ENCODE measurements at regions of chr16 and their contacts with region 1.

Region 1: DNA sequence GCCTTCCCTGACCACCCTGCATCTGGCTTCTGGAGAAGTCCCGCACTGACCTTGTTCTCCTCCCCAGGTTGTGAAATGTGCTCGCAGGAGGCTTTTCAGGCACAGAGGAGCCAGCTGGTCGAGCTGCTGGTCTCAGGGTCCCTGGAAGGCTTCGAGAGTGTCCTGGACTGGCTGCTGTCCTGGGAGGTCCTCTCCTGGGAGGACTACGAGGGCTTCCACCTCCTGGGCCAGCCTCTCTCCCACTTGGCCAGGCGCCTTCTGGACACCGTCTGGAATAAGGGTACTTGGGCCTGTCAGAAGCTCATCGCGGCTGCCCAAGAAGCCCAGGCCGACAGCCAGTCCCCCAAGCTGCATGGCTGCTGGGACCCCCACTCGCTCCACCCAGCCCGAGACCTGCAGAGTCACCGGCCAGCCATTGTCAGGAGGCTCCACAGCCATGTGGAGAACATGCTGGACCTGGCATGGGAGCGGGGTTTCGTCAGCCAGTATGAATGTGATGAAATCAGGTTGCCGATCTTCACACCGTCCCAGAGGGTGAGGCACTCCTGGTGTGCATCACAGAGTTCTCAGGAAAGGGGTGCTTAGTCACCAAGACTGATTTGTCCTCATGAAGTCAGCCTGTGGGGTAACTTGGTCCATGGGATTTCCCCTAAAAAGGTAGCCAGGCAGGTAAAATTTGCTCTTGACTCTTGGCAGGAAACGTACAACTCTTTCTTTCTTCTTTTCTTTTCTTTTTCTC is 6.2 kb downstream of the NOD2 start:
- DNase-seq: peak in 2 of 9 experiments; percentile 66 to 70
- ATAC-seq: no peak
- H3K4me3 ChIP-seq: no peak overlapping the region
- H3K4me3 Mint-ChIP-seq: no peak overlapping the region
- H3K27ac ChIP-seq: no peak overlapping the region
- H3K27ac Mint-ChIP-seq: no peak overlapping the region
- H3K4me1 ChIP-seq: peaks cover 29% of the 10 kb centered on the region
- H3K4me1 Mint-ChIP-seq: peaks cover 33% of the 10 kb centered on the region
- H3K27me3 ChIP-seq: no peaks in the 10 kb centered on the region
- H3K27me3 Mint-ChIP-seq: peaks cover 2% of the 10 kb centered on the region
- CTCF ChIP-seq: no peak

Region 2: DNA sequence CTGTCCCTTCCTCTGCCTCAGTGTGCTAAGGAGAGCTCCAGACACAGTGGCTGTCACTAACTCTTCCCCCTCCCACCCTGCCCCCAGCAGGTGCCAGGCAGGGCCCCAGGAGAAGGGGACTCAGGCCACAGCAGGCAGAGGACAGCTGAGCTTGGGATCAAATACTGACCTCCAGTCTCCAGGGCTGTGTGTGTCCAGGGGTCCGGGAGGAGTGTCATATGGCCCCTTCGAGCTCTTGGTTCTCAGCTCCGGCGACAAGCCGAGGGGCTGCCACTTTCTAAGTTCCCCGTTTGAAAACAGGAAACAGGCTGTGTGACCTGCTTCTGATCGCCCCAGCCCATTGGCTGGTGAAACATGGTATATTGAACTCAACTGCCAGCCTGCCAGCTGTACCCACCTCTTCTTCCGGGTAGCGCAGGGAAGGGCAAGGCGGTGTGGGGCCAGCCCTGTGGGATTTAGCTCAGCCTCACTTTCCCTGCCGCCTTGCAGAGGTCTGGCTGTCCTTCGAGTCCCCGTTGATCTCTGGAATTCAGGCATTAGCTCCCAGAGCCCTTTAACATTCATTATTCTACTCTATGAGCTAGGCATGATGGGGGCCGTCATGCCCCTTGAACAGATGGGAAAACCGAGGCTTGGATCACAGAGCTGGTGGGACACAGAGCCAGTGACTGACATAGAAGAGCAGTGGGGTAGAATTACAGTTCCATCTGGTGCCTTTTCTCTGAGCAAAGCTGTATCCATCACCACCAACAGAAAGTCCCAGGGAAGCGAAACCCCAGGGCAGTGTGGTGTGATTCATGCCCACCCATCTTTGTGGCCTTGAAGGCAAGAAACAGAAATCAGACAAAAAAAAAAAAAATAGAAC is 18.3 kb before region 1 on chr16 and contains the start of gene SNX20:
- CTCF ChIA-PET with region 1: interaction called, 5 read pairs
- POLR2A ChIA-PET with region 1: interaction called, 3 read pairs
- intact Hi-C with region 1: loop called in 1 of 2 experiments (anchors 2 kb)
- DNase-seq: peak; percentile 43 to 87 (median 72)
- ATAC-seq: peak; percentile 92
- H3K4me3 ChIP-seq: peak within 1 kb of the TSS; percentile 65 to 88
- H3K4me3 Mint-ChIP-seq: peak within 1 kb of the TSS; percentile 92
- H3K27ac ChIP-seq: peak within 1 kb of the TSS; percentile 51 to 86
- H3K27ac Mint-ChIP-seq: peak within 1 kb of the TSS; percentile 97
- H3K4me1 ChIP-seq: peaks cover 74% of the 10 kb centered on the region
- H3K4me1 Mint-ChIP-seq: peaks cover 85% of the 10 kb centered on the region
- H3K27me3 ChIP-seq: no peaks in the 10 kb centered on the region
- H3K27me3 Mint-ChIP-seq: no peaks in the 10 kb centered on the region
- CTCF ChIP-seq: no peak
- total RNA-seq, gene SNX20: 18.6 to 20.1 TPM

Measured in CD8-positive, alpha-beta T cell (primary cell).